ENCODE measurements at regions of chr7 and their contacts with region 1.

Region 1: GRCh38 chr7:77940647-77941046 is 142.1 kb downstream of the PHTF2 start:
- DNase-seq: no peak
- H3K4me3 Mint-ChIP-seq: no peak overlapping the region
- H3K27ac Mint-ChIP-seq: no peak overlapping the region
- H3K4me1 Mint-ChIP-seq: peaks cover 4% of the 10 kb centered on the region
- H3K27me3 Mint-ChIP-seq: no peaks in the 10 kb centered on the region

Region 2: GRCh38 chr7:77651573-77652162 is 289.0 kb before region 1 on chr7:
- intact Hi-C with region 1: loop called (anchors 5 kb)
- DNase-seq: peak; percentile 81
- H3K4me3 Mint-ChIP-seq: no peak overlapping the region
- H3K27ac Mint-ChIP-seq: no peak overlapping the region
- H3K4me1 Mint-ChIP-seq: no peaks in the 10 kb centered on the region
- H3K27me3 Mint-ChIP-seq: no peaks in the 10 kb centered on the region

Region 3: GRCh38 chr7:77855371-77856083 is 85.1 kb before region 1 on chr7:
- intact Hi-C with region 1: no loop called
- DNase-seq: no peak
- H3K4me3 Mint-ChIP-seq: no peak overlapping the region
- H3K27ac Mint-ChIP-seq: no peak overlapping the region
- H3K4me1 Mint-ChIP-seq: peaks cover 14% of the 10 kb centered on the region
- H3K27me3 Mint-ChIP-seq: no peaks in the 10 kb centered on the region

Region 4: DNA sequence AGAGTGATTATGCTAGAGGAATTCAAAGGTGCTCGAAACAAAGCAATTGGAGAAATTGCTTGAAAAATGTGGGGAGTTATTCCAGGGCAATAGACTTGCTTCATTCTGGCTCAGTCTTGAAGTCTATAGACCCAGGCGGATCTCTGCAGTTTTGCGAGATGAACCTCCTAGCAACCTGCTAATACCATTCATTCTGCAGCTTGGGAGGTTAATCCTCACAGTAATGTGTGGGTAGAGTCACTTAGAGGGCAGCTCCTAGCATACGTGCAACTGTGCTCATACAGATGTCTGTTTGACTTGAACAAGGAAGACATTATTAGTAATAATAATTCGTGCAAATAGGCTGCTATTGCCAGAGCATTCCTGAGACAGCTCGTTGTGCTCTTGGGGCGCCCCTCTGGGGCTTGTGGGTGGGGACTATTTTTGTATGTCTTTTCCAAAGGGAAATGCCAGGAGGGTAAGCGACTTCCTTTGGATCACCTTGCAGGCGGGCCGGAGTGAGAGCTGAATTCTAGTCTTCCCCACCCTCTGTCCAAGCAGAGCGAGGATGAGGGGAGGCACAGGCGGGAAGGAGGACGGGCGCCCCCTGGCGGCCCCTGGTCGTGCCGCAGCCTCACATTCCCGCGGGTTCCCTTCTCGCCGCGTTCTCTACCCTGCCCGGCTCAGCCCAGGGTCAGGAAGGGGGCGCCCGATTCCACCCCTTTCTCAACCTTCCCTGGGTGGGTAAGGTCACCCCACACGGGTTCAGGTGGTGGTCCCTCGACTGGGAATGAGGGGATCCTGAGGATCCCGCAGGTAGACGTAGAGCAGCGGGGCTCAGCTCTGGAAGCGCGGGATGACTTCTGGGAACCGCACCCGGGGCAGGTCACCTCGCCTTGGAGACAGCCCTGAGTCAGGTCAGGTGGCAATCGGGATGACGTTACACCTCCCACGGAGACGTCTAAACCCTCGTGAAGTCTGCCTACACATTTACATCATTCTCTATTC is 99.4 kb after region 1 on chr7:
- intact Hi-C with region 1: loop called (anchors 2 kb)
- DNase-seq: peak; percentile 81
- H3K4me3 Mint-ChIP-seq: no peak overlapping the region
- H3K27ac Mint-ChIP-seq: no peak overlapping the region
- H3K4me1 Mint-ChIP-seq: no peaks in the 10 kb centered on the region
- H3K27me3 Mint-ChIP-seq: peaks cover 11% of the 10 kb centered on the region

Region 5: DNA sequence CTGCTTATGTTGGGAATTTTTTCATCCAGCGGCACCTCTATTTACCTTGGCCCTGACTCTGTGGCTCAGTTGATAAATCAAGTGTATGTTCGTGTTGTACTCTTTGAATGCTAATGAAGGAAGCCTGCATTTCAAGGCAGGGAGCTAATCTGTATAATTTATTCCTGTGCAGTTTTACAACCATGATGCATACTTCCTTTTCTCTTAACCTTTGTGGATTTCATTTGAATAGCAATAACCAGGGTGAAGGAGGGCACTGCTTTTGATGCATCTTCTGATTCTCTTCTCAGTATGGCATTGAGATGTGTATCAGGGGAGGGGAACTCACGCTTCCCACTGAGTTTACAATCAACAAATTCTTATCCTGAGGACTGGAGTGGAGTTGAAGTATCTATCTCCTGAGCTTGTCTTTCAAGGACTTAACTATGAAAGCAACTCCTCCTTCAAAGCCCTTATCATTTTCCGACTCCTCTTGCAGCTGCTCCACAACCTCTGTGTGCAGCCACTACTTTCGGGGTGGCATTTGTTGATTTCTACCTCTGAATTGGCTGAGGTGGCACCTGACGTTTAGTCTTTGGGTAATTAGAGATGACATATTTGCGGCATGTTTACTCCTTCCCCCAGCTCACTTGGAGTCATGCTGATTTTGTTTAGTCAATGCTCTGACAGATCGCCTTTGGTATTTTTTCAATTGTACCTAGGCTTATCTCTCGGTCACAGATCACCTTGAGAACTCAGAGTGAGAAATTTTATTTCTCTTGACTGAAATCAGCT is 133.1 kb after region 1 on chr7:
- intact Hi-C with region 1: no loop called
- DNase-seq: no peak
- H3K4me3 Mint-ChIP-seq: no peak overlapping the region
- H3K27ac Mint-ChIP-seq: no peak overlapping the region
- H3K4me1 Mint-ChIP-seq: no peaks in the 10 kb centered on the region
- H3K27me3 Mint-ChIP-seq: peaks cover under 1% of the 10 kb centered on the region

Region 6: GRCh38 chr7:78226059-78226719 is 285.5 kb after region 1 on chr7:
- intact Hi-C with region 1: loop called (anchors 10 kb)
- DNase-seq: peak; percentile 60
- H3K4me3 Mint-ChIP-seq: no peak overlapping the region
- H3K27ac Mint-ChIP-seq: no peak overlapping the region
- H3K4me1 Mint-ChIP-seq: no peaks in the 10 kb centered on the region
- H3K27me3 Mint-ChIP-seq: peaks cover 2% of the 10 kb centered on the region

Measured in activated CD4-positive, alpha-beta T cell treated with anti-CD3 and anti-CD28 coated beads, Interleukin-2, amount 10 ng/mL, durations not matched to agents 24 days and 14 days (primary cell).